ENCODE measurements at regions of chr6 and their contacts with region 1.

Region 1: GRCh38 chr6:24283043-24283985 is 74.5 kb downstream of the DCDC2 start:
- DNase-seq: peak; percentile 59
- ATAC-seq: peak; percentile 95
- H3K4me3 ChIP-seq: no peak overlapping the region
- H3K27ac ChIP-seq: no peak overlapping the region
- H3K4me1 ChIP-seq: peaks cover 5% of the 10 kb centered on the region; the same call in 1 of the 2 replicates
- H3K27me3 ChIP-seq: peaks cover 0 to 2% of the 10 kb centered on the region in 2 experiments; a peak in 1 of 4 replicates
- CTCF ChIP-seq: peak; percentile 44 to 57 (median 52)
- EP300 ChIP-seq: 0 out of 4 replicates have a peak, but pooled peaks of 1 of the 2 experiments have one; percentile 37
- POLR2A ChIP-seq: no peak
- RAD21 ChIP-seq: peak; percentile 76

Region 2: GRCh38 chr6:24374612-24375011 is 91.3 kb after region 1 on chr6:
- CTCF ChIA-PET with region 1: no interaction called
- POLR2A ChIA-PET with region 1: no interaction called
- RAD21 ChIA-PET with region 1: no interaction called
- SMC1A ChIA-PET with region 1: no interaction called
- in situ Hi-C with region 1: no loop called
- intact Hi-C with region 1: no loop called
- DNase-seq: no peak
- ATAC-seq: no peak
- H3K4me3 ChIP-seq: no peak overlapping the region
- H3K27ac ChIP-seq: no peak overlapping the region
- H3K4me1 ChIP-seq: peaks cover 7% of the 10 kb centered on the region
- H3K27me3 ChIP-seq: no peaks in the 10 kb centered on the region
- CTCF ChIP-seq: no peak
- EP300 ChIP-seq: no peak
- POLR2A ChIP-seq: no peak
- RAD21 ChIP-seq: no peak

Region 3: GRCh38 chr6:24385536-24386269 is 102.4 kb after region 1 on chr6:
- CTCF ChIA-PET with region 1: interaction called, 11 read pairs
- POLR2A ChIA-PET with region 1: no interaction called
- RAD21 ChIA-PET with region 1: interaction called, 7 read pairs
- SMC1A ChIA-PET with region 1: interaction called, 7 read pairs
- in situ Hi-C with region 1: no loop called
- intact Hi-C with region 1: no loop called
- DNase-seq: no peak
- ATAC-seq: peak; percentile 68
- H3K4me3 ChIP-seq: no peak overlapping the region
- H3K27ac ChIP-seq: no peak overlapping the region
- H3K4me1 ChIP-seq: no peaks in the 10 kb centered on the region
- H3K27me3 ChIP-seq: no peaks in the 10 kb centered on the region
- CTCF ChIP-seq: no peak
- EP300 ChIP-seq: no peak
- POLR2A ChIP-seq: no peak
- RAD21 ChIP-seq: no peak

Region 4: GRCh38 chr6:24408719-24409410 is 125.6 kb after region 1 on chr6:
- CTCF ChIA-PET with region 1: interaction called, 14 read pairs
- POLR2A ChIA-PET with region 1: no interaction called
- RAD21 ChIA-PET with region 1: interaction called, 3 read pairs
- SMC1A ChIA-PET with region 1: interaction called, 8 read pairs
- in situ Hi-C with region 1: no loop called
- intact Hi-C with region 1: no loop called
- DNase-seq: no peak
- ATAC-seq: peak; percentile 94
- H3K4me3 ChIP-seq: no peak overlapping the region
- H3K27ac ChIP-seq: peak overlapping the region; percentile 46; the same call in 1 of the 2 replicates
- H3K4me1 ChIP-seq: peaks cover 19% of the 10 kb centered on the region
- H3K27me3 ChIP-seq: no peaks in the 10 kb centered on the region
- CTCF ChIP-seq: no peak
- EP300 ChIP-seq: no peak
- POLR2A ChIP-seq: no peak
- RAD21 ChIP-seq: no peak

Region 5: GRCh38 chr6:24494821-24495795 is 211.8 kb after region 1 on chr6 and contains the start of gene ALDH5A1:
- CTCF ChIA-PET with region 1: interaction called, 10 read pairs
- POLR2A ChIA-PET with region 1: no interaction called
- RAD21 ChIA-PET with region 1: interaction called, 5 read pairs
- SMC1A ChIA-PET with region 1: interaction called, 6 read pairs
- in situ Hi-C with region 1: no loop called
- intact Hi-C with region 1: no loop called
- DNase-seq: no peak
- ATAC-seq: peak; percentile 86
- H3K4me3 ChIP-seq: peak within 1 kb of the TSS; percentile 79
- H3K27ac ChIP-seq: peak within 1 kb of the TSS; percentile 33
- H3K4me1 ChIP-seq: peaks cover 3% of the 10 kb centered on the region; the same call in 1 of the 2 replicates
- H3K27me3 ChIP-seq: no peaks in the 10 kb centered on the region
- CTCF ChIP-seq: peak; percentile 30 to 57 (median 34); a peak in 5 of 6 replicates
- EP300 ChIP-seq: no peak
- POLR2A ChIP-seq: peak; percentile 71
- RAD21 ChIP-seq: peak; percentile 66
- polyA plus RNA-seq, gene ALDH5A1: 2.6 to 6.9 TPM

Region 6: GRCh38 chr6:24766680-24767462 is 483.6 kb after region 1 on chr6:
- CTCF ChIA-PET with region 1: interaction called, 8 read pairs
- POLR2A ChIA-PET with region 1: no interaction called
- RAD21 ChIA-PET with region 1: no interaction called
- SMC1A ChIA-PET with region 1: interaction called, 3 read pairs
- in situ Hi-C with region 1: no loop called
- intact Hi-C with region 1: loop called (anchors 5 kb)
- DNase-seq: no peak
- ATAC-seq: peak; percentile 86
- H3K4me3 ChIP-seq: no peak overlapping the region
- H3K27ac ChIP-seq: no peak overlapping the region
- H3K4me1 ChIP-seq: no peaks in the 10 kb centered on the region
- H3K27me3 ChIP-seq: no peaks in the 10 kb centered on the region
- CTCF ChIP-seq: peak; percentile 24 to 68 (median 45); a peak in 3 of 6 replicates
- EP300 ChIP-seq: no peak
- POLR2A ChIP-seq: no peak
- RAD21 ChIP-seq: peak; percentile 75

Measured in GM12878 (cell line).